PC-3 (cell line): ENCODE measurements at regions of chrX and their contacts with region 1.

Region 1: GRCh38 chrX:120664081-120664480 is 34.2 kb upstream of the C1GALT1C1 start:
- DNase-seq: peak; percentile 57
- ATAC-seq: no peak
- H3K4me3 ChIP-seq: no peak overlapping the region
- H3K27ac ChIP-seq: peak overlapping the region; percentile 50
- H3K4me1 ChIP-seq: peaks cover 35% of the 10 kb centered on the region
- H3K27me3 ChIP-seq: no peaks in the 10 kb centered on the region
- CTCF ChIP-seq: peak; percentile 71

Region 2: DNA sequence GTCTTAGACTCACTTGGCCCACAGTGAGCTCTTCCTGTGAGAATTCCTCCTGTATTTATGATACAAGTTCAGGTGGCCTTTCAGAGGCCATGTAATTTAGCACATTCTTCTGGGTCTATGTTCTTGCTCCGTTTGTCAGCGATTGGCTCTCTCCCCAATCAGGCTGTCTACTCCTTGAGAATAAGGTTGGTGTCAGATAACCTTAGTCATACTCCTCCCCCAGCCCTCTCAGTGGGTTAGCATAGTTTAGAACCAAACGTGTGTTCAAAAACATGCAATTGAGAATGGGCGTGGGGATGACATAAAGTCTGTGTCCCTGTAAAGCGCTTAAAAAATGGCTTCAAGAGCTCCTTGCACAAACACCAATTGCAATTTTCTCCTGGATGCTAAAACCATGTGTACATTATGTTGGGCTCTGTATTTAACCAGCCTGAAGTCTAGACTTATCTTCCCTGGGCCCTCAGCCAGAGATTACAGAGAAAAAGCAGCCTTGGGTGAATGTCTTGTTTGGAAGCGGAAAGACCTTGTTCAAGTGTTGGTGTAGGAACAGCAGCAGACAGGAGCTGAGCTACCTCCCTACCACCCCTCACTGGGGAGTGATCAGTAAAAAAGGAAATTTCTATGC is 1601.2 kb before region 1 on chrX:
- CTCF ChIA-PET with region 1: no interaction called
- POLR2A ChIA-PET with region 1: no interaction called
- intact Hi-C with region 1: no loop called
- DNase-seq: peak; percentile 34
- ATAC-seq: peak; percentile 38
- H3K4me3 ChIP-seq: no peak overlapping the region
- H3K27ac ChIP-seq: no peak overlapping the region
- H3K4me1 ChIP-seq: peaks cover 9% of the 10 kb centered on the region
- H3K27me3 ChIP-seq: no peaks in the 10 kb centered on the region
- CTCF ChIP-seq: no peak

Region 3: GRCh38 chrX:120549483-120550452 is 114.3 kb before region 1 on chrX:
- CTCF ChIA-PET with region 1: no interaction called
- POLR2A ChIA-PET with region 1: no interaction called
- intact Hi-C with region 1: loop called (anchors 5 kb)
- DNase-seq: peak; percentile 88
- ATAC-seq: peak; percentile 94
- H3K4me3 ChIP-seq: peak overlapping the region; percentile 31; the same call in 1 of the 2 replicates
- H3K27ac ChIP-seq: peak overlapping the region; percentile 86
- H3K4me1 ChIP-seq: peaks cover 26% of the 10 kb centered on the region
- H3K27me3 ChIP-seq: no peaks in the 10 kb centered on the region
- CTCF ChIP-seq: no peak

Region 4: GRCh38 chrX:120769576-120770341 is 105.7 kb after region 1 on chrX:
- CTCF ChIA-PET with region 1: no interaction called
- POLR2A ChIA-PET with region 1: no interaction called
- intact Hi-C with region 1: loop called (anchors 2 kb)
- DNase-seq: peak; percentile 82
- ATAC-seq: peak; percentile 67
- H3K4me3 ChIP-seq: no peak overlapping the region
- H3K27ac ChIP-seq: peak overlapping the region; percentile 86
- H3K4me1 ChIP-seq: peaks cover 28% of the 10 kb centered on the region
- H3K27me3 ChIP-seq: no peaks in the 10 kb centered on the region
- CTCF ChIP-seq: peak; percentile 70